IMR-90 (cell line): ENCODE measurements at regions of chr10 and their contacts with region 1.

Region 1: DNA sequence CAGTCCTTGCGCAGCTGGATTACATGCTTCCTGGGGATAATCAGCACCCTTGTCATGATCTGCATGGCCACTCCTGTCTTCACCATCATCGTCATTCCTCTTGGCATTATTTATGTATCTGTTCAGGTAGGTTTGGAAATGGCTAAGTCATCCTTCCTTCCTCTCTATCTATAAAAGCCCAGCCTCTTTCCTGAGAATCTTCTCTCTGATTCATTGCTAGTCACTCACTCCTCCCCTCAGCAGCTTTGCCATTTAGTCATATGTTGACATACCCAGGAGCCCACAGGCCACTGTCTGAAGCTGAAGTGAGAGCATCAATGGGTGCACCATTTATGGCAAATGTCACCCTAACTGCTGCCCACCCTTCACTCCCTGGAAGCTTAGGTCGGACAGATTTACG is 52.0 kb downstream of the ABCC2 start:
- DNase-seq: peak; percentile 89
- ATAC-seq: peak; percentile 95
- H3K4me3 ChIP-seq: no peak overlapping the region
- H3K27ac ChIP-seq: peak overlapping the region; percentile 27; the same call in 1 of the 2 replicates
- H3K4me1 ChIP-seq: peaks cover 11% of the 10 kb centered on the region
- H3K27me3 ChIP-seq: no peaks in the 10 kb centered on the region
- CTCF ChIP-seq: no peak
- POLR2A ChIP-seq: no peak
- RAD21 ChIP-seq: no peak

Region 2: DNA sequence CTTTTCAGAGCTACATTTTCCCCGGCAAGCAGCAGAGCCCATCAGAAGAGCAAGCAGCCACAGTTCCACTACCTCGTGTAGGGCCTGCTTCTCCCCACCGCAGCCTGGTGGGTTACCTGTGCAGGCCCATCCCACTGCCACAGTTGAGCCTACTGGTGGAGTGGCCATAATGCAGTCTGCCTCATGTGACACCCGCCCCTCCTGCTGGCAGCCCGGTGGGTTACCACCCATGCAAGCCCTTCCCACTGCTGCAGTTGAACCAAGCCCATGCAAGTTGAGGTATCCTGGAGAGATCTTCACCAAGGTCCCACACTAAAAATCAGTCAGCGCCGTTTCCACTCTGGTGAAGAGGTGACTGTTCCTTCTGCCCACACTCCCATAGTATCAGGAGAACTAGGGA is 537.4 kb before region 1 on chr10:
- CTCF ChIA-PET with region 1: no interaction called
- POLR2A ChIA-PET with region 1: no interaction called
- dilution Hi-C with region 1: no loop called
- in situ Hi-C with region 1: no loop called
- intact Hi-C with region 1: no loop called
- DNase-seq: no peak
- ATAC-seq: no peak
- H3K4me3 ChIP-seq: no peak overlapping the region
- H3K27ac ChIP-seq: no peak overlapping the region
- H3K4me1 ChIP-seq: no peaks in the 10 kb centered on the region
- H3K27me3 ChIP-seq: no peaks in the 10 kb centered on the region
- CTCF ChIP-seq: no peak
- POLR2A ChIP-seq: no peak
- RAD21 ChIP-seq: no peak

Region 3: DNA sequence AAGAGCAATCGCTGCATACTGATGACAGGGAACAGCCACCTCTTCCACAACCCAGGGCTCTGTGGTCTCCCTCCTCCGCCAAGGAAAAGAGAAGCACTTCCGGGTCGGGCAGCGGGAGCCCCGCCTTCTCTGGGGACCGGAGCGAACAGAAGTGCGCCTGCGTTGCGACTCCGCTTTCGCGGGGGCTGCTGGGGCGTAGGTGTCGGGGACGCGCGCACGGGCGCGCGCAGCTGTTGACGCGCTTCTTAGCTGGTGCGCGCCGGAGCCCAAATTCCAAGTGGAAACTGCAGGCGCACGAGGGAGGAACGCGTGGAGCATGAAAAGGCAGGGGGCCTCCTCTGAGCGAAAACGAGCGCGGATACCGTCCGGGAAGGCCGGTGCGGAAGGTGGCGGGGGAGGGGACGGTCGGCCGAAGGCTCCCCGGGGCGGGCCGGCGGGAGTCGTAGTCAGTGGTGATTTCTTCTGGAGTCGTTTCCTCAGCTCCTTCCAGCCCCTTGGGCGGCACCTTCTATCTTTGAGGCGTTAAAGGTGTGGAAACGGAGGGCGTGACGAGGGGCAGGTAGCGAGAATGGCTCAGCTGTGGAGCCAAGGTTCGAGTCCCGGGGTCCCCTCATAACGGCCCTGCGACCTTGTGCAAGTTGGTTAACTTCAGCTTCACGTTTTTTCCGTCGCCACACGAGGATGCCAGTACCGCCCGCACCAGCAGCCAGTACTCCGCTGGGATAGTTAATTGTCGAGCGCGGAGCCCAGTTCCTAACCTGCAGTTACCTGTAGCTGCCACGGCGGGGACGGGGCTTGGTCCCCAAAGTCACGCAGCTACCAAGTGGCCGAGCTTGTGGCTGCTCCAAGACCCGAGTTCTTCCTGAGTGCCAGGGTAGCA is 102.1 kb before region 1 on chr10 and contains the starts of genes COX15 and CUTC:
- CTCF ChIA-PET with region 1: no interaction called
- POLR2A ChIA-PET with region 1: no interaction called
- dilution Hi-C with region 1: no loop called
- in situ Hi-C with region 1: no loop called
- intact Hi-C with region 1: loop called (anchors 5 kb)
- DNase-seq: peak; percentile 96
- ATAC-seq: peak; percentile 95
- H3K4me3 ChIP-seq: peak within 1 kb of the TSS; percentile 69
- H3K27ac ChIP-seq: peak within 1 kb of the TSS; percentile 96
- H3K4me1 ChIP-seq: peaks cover 2% of the 10 kb centered on the region; the same call in 1 of the 2 replicates
- H3K27me3 ChIP-seq: no peaks in the 10 kb centered on the region
- CTCF ChIP-seq: peak; percentile 25; the same call in 1 of the 2 replicates
- POLR2A ChIP-seq: peak; percentile 79
- RAD21 ChIP-seq: peak; percentile 30
- total RNA-seq, gene COX15: 40.1 and 41.1 TPM in 2 replicates
- total RNA-seq, gene CUTC: 7.0 and 17.2 TPM in 2 replicates

Region 4: DNA sequence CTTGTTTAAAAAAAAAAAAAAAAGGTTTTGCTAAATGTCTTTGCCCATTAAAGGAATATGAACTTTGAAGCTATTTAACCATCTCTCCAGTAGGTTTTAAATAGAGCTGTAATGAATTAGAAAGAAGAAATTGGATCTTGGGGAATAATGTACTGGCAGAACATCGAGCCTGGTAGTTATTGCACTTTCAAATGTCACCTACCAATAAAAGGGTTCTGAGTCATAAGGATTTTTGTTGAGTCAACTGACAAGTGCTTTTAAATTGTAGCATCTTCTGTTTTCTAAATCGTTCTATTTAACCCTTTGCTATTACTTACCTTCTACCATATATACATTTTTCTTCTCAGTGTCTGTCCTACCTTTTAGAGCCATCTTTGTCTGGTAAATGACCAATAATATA is 91.7 kb before region 1 on chr10:
- CTCF ChIA-PET with region 1: no interaction called
- POLR2A ChIA-PET with region 1: no interaction called
- dilution Hi-C with region 1: no loop called
- in situ Hi-C with region 1: loop called (anchors 5 kb)
- intact Hi-C with region 1: no loop called
- DNase-seq: peak; percentile 48
- ATAC-seq: peak; percentile 33
- H3K4me3 ChIP-seq: no peak overlapping the region
- H3K27ac ChIP-seq: no peak overlapping the region
- H3K4me1 ChIP-seq: peaks cover 8% of the 10 kb centered on the region
- H3K27me3 ChIP-seq: no peaks in the 10 kb centered on the region
- CTCF ChIP-seq: no peak
- POLR2A ChIP-seq: no peak
- RAD21 ChIP-seq: no peak

Region 5: DNA sequence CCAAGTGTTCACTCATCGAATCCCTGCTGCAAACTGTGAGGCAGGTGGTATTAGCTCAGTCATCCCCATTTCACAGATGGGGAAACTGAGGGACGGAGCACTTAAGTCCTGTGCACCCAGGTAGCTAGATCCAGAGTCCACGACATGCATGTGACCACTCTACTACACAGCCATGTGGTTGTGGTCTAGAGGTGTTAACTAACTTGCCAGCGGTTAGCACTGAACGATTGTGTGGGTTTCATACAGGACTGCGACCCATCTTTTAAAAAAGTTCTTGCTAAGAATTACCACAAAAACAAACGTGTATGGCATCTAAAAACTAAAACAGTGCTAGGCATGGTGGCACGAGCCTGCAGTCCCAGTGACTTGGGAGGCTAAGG is 68.1 kb before region 1 on chr10:
- CTCF ChIA-PET with region 1: no interaction called
- POLR2A ChIA-PET with region 1: no interaction called
- dilution Hi-C with region 1: no loop called
- in situ Hi-C with region 1: no loop called
- intact Hi-C with region 1: no loop called
- DNase-seq: no peak
- ATAC-seq: no peak
- H3K4me3 ChIP-seq: no peak overlapping the region
- H3K27ac ChIP-seq: no peak overlapping the region
- H3K4me1 ChIP-seq: peaks cover 4% of the 10 kb centered on the region; the same call in 1 of the 2 replicates
- H3K27me3 ChIP-seq: no peaks in the 10 kb centered on the region
- CTCF ChIP-seq: no peak
- POLR2A ChIP-seq: no peak
- RAD21 ChIP-seq: no peak

Region 6: GRCh38 chr10:99784025-99784726 is 50.2 kb before region 1 on chr10:
- CTCF ChIA-PET with region 1: no interaction called
- POLR2A ChIA-PET with region 1: no interaction called
- dilution Hi-C with region 1: no loop called
- in situ Hi-C with region 1: no loop called
- intact Hi-C with region 1: loop called (anchors 5 kb)
- DNase-seq: peak; percentile 90
- ATAC-seq: peak; percentile 54
- H3K4me3 ChIP-seq: no peak overlapping the region
- H3K27ac ChIP-seq: peak overlapping the region; percentile 83
- H3K4me1 ChIP-seq: peaks cover 20% of the 10 kb centered on the region
- H3K27me3 ChIP-seq: no peaks in the 10 kb centered on the region
- CTCF ChIP-seq: no peak
- POLR2A ChIP-seq: no peak
- RAD21 ChIP-seq: peak; percentile 16; the same call in 1 of the 2 replicates

Region 7: DNA sequence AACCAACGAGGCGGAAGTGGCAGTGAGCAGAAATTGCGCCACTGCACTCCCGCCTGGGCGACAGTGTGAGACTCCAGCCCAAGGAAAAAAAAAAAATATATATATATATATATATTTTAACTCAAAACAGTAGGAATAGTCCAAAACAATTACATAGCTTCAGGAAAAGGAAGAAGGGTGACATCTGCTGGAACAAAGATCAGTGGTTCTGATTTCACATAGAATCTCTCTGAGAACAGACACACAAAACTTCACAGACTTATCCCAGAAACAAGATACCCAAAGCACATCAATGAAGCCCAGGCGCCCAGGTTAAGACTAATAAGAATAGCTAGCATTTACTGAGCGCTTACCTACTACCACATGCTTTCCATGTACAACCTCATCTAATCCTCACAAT is 130.4 kb after region 1 on chr10:
- CTCF ChIA-PET with region 1: no interaction called
- POLR2A ChIA-PET with region 1: no interaction called
- dilution Hi-C with region 1: no loop called
- in situ Hi-C with region 1: no loop called
- intact Hi-C with region 1: no loop called
- DNase-seq: peak; percentile 42
- ATAC-seq: 0 out of 2 replicates have a peak, but pooled peaks have one; percentile 21
- H3K4me3 ChIP-seq: no peak overlapping the region
- H3K27ac ChIP-seq: no peak overlapping the region
- H3K4me1 ChIP-seq: peaks cover 5% of the 10 kb centered on the region
- H3K27me3 ChIP-seq: no peaks in the 10 kb centered on the region
- CTCF ChIP-seq: peak; percentile 37; the same call in 1 of the 2 replicates
- POLR2A ChIP-seq: no peak
- RAD21 ChIP-seq: peak; percentile 38